ENCODE measurements at regions of chr1 and their contacts with region 1.

Region 1: DNA sequence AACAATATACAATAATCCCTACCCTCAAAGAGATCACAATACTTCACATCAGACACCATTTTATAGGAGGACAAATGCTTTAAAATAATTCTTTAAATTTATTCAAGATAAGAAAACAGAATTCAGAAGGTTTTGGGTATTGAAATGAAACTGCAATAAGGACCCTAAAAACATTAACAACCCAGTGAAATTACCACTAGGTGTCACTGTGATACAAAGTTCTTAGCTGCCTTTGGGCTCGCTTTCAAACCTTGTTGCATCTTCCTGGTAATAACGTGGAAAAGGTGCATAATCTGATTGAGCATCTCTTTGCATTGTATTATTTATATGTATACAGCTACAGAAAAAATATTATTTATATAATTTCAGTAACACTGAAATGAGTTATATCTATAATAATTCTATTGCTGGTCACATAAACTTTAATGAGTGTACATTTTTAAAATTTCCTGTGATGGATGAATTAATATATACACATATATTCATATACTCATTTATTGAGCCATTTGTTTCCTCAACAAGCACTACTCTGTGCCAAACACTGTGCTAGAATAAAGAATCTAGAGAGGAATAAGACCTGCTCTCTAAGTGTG is 185.2 kb downstream of the FAF1 start:
- DNase-seq: peak; percentile 77
- ATAC-seq: peak; percentile 70
- H3K4me3 ChIP-seq: no peak overlapping the region
- H3K27ac ChIP-seq: no peak overlapping the region
- H3K4me1 ChIP-seq: no peaks in the 10 kb centered on the region
- H3K27me3 ChIP-seq: no peaks in the 10 kb centered on the region
- CTCF ChIP-seq: peak; percentile 83

Region 2: DNA sequence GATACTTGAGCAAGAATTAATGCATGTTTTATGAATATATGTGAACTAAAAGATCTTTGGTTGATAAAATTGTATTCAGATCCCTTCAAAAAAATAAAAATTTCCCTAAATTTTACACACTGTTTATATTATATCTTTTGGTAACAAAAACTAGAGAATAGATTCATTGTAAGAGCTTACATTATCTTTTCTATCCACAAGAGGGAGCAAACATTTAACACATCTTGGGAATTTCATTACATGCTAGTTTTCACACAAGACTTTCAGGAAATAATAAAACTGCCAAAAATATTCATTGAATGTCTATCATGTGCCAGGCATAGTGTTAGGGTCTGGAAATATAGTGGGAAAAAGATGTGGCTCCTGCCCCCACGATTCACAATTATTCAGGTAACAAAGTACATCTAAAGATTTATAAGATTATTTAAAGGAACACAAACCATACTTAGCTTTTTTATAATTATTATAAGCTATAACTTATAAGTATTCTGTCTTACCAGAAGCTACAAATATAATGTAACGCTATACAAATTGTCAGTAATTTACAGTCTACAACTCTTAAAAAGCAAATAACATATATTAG is 154.6 kb after region 1 on chr1:
- CTCF ChIA-PET with region 1: interaction called, 3 read pairs
- POLR2A ChIA-PET with region 1: no interaction called
- intact Hi-C with region 1: loop called (anchors 1 kb)
- DNase-seq: peak; percentile 64
- ATAC-seq: no peak
- H3K4me3 ChIP-seq: no peak overlapping the region
- H3K27ac ChIP-seq: no peak overlapping the region
- H3K4me1 ChIP-seq: no peaks in the 10 kb centered on the region
- H3K27me3 ChIP-seq: no peaks in the 10 kb centered on the region
- CTCF ChIP-seq: peak; percentile 78

Region 3: GRCh38 chr1:50940291-50940690 is 165.4 kb after region 1 on chr1:
- CTCF ChIA-PET with region 1: no interaction called
- POLR2A ChIA-PET with region 1: no interaction called
- intact Hi-C with region 1: no loop called
- DNase-seq: no peak
- ATAC-seq: no peak
- H3K4me3 ChIP-seq: no peak overlapping the region
- H3K27ac ChIP-seq: no peak overlapping the region
- H3K4me1 ChIP-seq: no peaks in the 10 kb centered on the region
- H3K27me3 ChIP-seq: no peaks in the 10 kb centered on the region
- CTCF ChIP-seq: no peak

Region 4: GRCh38 chr1:50959913-50960844 is 185.3 kb after region 1 on chr1 and contains the start of gene FAF1:
- CTCF ChIA-PET with region 1: interaction called, 5 read pairs
- POLR2A ChIA-PET with region 1: no interaction called
- intact Hi-C with region 1: loop called (anchors 5 kb)
- DNase-seq: peak; percentile 99
- ATAC-seq: peak; percentile 84
- H3K4me3 ChIP-seq: peak within 1 kb of the TSS; percentile 97
- H3K27ac ChIP-seq: peak within 1 kb of the TSS; percentile 81
- H3K4me1 ChIP-seq: peaks cover 7% of the 10 kb centered on the region; the same call in 1 of the 2 replicates
- H3K27me3 ChIP-seq: no peaks in the 10 kb centered on the region
- CTCF ChIP-seq: peak; percentile 49
- total RNA-seq, gene FAF1: 12.7 and 14.7 TPM in 2 replicates

Region 5: DNA sequence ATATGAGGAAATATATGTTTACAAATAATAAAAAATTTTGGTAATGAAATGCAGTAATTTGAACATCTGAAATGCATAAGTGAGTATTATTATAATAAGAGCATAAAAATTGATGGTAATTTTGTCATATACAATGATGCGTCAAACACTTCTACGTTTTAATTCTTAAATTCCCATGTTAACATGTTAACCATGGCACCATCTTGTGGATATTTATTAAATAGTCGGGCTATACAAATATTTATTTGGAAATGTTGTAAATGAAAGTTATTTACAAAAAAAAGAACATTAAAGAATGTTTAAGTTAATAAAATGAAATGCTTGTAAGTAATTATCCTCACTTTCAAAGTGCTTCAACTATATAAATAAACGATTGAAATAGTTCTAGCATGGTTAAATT is 270.0 kb after region 1 on chr1:
- CTCF ChIA-PET with region 1: no interaction called
- POLR2A ChIA-PET with region 1: no interaction called
- intact Hi-C with region 1: loop called (anchors 2 kb)
- DNase-seq: peak; percentile 50
- ATAC-seq: no peak
- H3K4me3 ChIP-seq: no peak overlapping the region
- H3K27ac ChIP-seq: no peak overlapping the region
- H3K4me1 ChIP-seq: no peaks in the 10 kb centered on the region
- H3K27me3 ChIP-seq: no peaks in the 10 kb centered on the region
- CTCF ChIP-seq: peak; percentile 58